Activated CD8-positive, alpha-beta T cell treated with anti-CD3 and anti-CD28 coated beads for 36 hours (primary cell): ENCODE measurements at regions of chr10 and their contacts with region 1.

Region 1: DNA sequence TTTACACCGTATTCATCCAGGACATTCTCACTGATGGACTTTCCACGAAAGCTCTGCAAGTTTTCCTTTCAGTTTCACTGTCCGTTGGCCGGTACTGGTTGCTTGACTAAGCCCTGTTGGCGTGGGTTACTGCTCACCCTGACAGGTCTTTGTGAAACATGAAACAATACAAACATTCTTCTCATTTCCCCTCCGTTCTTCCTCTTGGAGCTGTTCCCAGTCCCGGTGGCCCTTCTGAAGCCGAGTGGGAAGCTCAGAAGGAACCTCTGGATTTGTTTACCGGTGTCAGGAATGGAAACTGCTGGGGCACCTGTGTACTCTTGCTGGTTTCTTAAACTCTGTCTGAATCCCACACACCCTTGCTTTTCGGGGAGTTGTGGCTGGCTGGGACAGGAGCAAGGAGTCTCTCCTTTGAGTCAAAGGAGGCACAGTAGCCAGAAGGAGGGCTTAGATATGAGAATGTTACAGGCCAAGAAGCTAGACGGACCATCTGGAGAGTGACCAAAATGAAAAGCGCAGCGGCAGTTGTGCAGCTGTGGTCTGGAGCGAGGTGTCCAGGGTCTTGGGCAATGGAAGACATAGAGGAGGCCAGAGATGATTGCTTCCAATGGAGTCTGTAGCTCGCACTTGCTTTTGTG is 45.7 kb downstream of the LYZL2 start:
- DNase-seq: peak; percentile 7
- ATAC-seq: no peak
- H3K4me3 Mint-ChIP-seq: peak overlapping the region; percentile 23
- H3K27ac Mint-ChIP-seq: no peak overlapping the region
- H3K4me1 Mint-ChIP-seq: peaks cover 4% of the 10 kb centered on the region
- H3K27me3 Mint-ChIP-seq: peaks cover 2% of the 10 kb centered on the region
- CTCF ChIP-seq: no peak

Region 2: GRCh38 chr10:30384701-30385201 is 199.1 kb before region 1 on chr10:
- CTCF ChIA-PET with region 1: interaction called, 129 read pairs
- POLR2A ChIA-PET with region 1: no interaction called
- intact Hi-C with region 1: no loop called
- DNase-seq: peak; percentile 50
- ATAC-seq: peak; percentile 83
- H3K4me3 Mint-ChIP-seq: no peak overlapping the region
- H3K27ac Mint-ChIP-seq: no peak overlapping the region
- H3K4me1 Mint-ChIP-seq: no peaks in the 10 kb centered on the region
- H3K27me3 Mint-ChIP-seq: peaks cover 3% of the 10 kb centered on the region
- CTCF ChIP-seq: no peak

Region 3: GRCh38 chr10:30534465-30535144 is 49.3 kb before region 1 on chr10:
- CTCF ChIA-PET with region 1: interaction called, 12 read pairs
- POLR2A ChIA-PET with region 1: interaction called, 3 read pairs
- intact Hi-C with region 1: no loop called
- DNase-seq: peak; percentile 87
- ATAC-seq: peak; percentile 55
- H3K4me3 Mint-ChIP-seq: no peak overlapping the region
- H3K27ac Mint-ChIP-seq: no peak overlapping the region
- H3K4me1 Mint-ChIP-seq: peaks cover 29% of the 10 kb centered on the region
- H3K27me3 Mint-ChIP-seq: no peaks in the 10 kb centered on the region
- CTCF ChIP-seq: peak; percentile 90

Region 4: GRCh38 chr10:30553625-30554439 is 30.1 kb before region 1 on chr10:
- CTCF ChIA-PET with region 1: interaction called, 16 read pairs
- POLR2A ChIA-PET with region 1: no interaction called
- intact Hi-C with region 1: no loop called
- DNase-seq: no peak
- ATAC-seq: no peak
- H3K4me3 Mint-ChIP-seq: no peak overlapping the region
- H3K27ac Mint-ChIP-seq: no peak overlapping the region
- H3K4me1 Mint-ChIP-seq: peaks cover 3% of the 10 kb centered on the region
- H3K27me3 Mint-ChIP-seq: peaks cover 1% of the 10 kb centered on the region
- CTCF ChIP-seq: no peak

Region 5: DNA sequence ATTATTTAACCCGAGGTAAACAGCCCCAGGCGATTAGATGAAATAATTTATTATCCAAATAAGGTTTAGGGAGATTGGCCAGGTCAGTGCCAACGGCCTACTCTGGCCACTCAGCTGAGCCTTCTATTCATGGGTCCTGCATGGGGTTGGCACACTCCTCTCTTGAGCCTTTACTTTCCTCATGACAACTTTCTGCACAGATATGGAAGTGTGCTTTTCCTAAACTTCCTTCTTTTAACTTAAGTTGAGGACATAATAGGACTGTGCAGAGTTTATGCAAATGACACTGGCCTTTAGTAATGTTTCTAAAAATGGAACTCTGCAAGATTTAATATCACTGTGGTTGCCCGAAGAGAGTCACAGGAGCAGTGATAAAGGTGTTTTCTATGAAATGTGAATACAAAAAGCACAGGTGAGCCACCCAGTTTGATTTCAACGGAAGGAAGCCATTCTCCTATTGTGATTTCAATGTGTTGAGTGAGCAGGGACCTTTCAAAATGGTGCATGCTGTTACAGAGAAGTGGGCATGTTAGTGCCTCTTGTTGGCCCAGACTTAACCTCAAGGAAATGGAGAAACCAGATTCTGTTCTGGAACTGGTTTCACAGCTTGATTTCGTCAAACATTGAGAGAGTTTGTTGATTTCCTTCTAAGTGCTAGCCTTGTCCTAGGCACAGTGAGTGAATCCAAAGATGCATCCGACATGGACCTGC is 10.0 kb before region 1 on chr10:
- CTCF ChIA-PET with region 1: interaction called, 18 read pairs
- POLR2A ChIA-PET with region 1: interaction called, 5 read pairs
- intact Hi-C with region 1: no loop called
- DNase-seq: no peak
- ATAC-seq: no peak
- H3K4me3 Mint-ChIP-seq: no peak overlapping the region
- H3K27ac Mint-ChIP-seq: no peak overlapping the region
- H3K4me1 Mint-ChIP-seq: no peaks in the 10 kb centered on the region
- H3K27me3 Mint-ChIP-seq: peaks cover 1% of the 10 kb centered on the region
- CTCF ChIP-seq: no peak

Region 6: GRCh38 chr10:30639946-30640786 is 56.3 kb after region 1 on chr10:
- CTCF ChIA-PET with region 1: interaction called, 18 read pairs
- POLR2A ChIA-PET with region 1: interaction called, 3 read pairs
- intact Hi-C with region 1: no loop called
- DNase-seq: peak; percentile 33
- ATAC-seq: peak; percentile 26
- H3K4me3 Mint-ChIP-seq: no peak overlapping the region
- H3K27ac Mint-ChIP-seq: no peak overlapping the region
- H3K4me1 Mint-ChIP-seq: peaks cover 4% of the 10 kb centered on the region
- H3K27me3 Mint-ChIP-seq: peaks cover 28% of the 10 kb centered on the region
- CTCF ChIP-seq: peak; percentile 88